ENCODE measurements at regions of chr9 and their contacts with region 1.

Region 1: GRCh38 chr9:78369639-78370219 is 72.8 kb downstream of the PSAT1 start:
- DNase-seq: peak; percentile 50
- CTCF ChIP-seq: peak; percentile 78

Region 2: DNA sequence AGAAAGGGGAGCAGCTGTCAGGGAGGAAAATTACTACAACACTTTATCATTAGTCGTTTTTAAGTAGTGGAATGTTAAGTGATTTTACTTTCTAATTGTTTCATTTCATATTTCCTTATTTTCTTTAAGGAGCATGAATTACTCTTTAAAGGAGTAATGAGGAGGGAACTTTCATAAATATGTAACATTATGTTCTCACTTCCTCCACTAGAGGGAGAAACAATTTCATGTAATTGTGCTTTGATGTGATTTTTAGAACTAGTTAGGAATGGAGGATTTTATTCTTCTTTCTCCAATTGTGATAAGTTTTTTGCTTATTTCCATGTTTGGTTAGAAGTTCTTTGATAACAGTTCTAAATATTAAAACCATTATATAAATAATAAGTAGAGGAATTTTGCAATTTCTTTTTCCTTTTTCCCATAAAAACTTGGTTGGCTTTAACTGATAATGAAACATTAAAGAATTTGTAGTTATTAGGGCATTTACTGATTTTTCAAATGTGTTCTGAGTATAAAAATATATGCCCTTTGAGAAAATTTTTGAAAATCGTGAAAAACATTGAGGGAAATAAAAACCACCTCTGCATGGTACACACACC is 108.2 kb before region 1 on chr9:
- in situ Hi-C with region 1: loop called (anchors 5 kb)
- DNase-seq: peak; percentile 37
- CTCF ChIP-seq: peak; percentile 6

Region 3: GRCh38 chr9:78578072-78578471 is 208.3 kb after region 1 on chr9:
- in situ Hi-C with region 1: no loop called
- DNase-seq: no peak
- CTCF ChIP-seq: no peak